Psoas muscle (tissue), 8 donors: ENCODE measurements at regions of chr6 and their contacts with region 1.

Region 1: DNA sequence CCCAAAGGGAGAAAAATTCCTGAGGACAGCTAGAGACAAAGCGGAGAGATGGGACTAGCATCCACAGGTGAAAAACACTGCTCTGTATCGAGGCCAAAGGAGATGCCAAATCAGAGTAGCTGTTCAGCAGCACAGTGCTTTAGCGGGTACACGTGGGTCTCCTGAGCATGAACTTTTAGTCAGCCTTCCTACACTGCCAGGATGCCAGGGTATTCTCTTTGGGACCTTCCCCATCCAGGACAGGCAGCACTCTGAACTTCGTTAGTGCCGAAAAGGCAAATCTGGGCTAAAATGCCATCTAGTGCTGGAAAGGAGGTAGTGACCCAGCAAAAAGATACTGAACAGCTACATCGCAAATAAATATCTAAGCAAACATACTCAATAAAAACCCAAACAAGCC is 64.9 kb downstream of the C6orf58 start:
- DNase-seq: no peak
- ATAC-seq: peak in 3 of 4 donors; percentile 46 to 64 (median 47)
- H3K4me3 ChIP-seq: no peak overlapping the region
- H3K27ac ChIP-seq: no peak overlapping the region
- H3K4me1 ChIP-seq: no peaks in the 10 kb centered on the region
- H3K27me3 ChIP-seq: no peaks in the 10 kb centered on the region
- CTCF ChIP-seq: peak; percentile 46

Region 2: DNA sequence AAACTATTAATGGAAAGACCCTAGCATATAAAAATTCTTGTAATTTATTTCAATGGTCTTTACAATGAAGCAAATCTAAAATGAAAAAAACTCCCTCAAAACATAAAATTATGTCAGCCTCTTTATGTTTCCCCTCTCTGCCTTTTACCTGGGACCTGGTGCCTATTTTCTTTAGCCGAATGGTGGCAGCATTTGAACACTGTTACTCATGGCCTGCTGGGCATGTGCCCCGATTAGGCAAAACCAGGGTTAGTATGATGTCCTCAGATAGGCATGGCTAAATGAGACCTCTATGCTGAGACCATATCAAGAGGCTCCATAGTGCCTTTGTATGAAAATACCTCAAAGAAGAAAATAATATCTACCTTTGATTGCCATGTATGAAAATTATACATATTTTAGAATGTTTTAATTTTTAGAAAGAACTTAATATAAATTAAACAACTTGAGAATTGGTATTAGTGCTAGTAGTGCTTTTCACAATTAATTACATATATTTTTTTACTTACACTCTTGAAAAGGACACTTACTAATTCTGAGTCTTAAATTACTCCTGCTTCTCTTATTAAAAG is 87.4 kb before region 1 on chr6:
- intact Hi-C with region 1: loop called in 1 of 2 experiments (anchors 5 kb)
- DNase-seq: no peak
- ATAC-seq: peak; percentile 52 to 67 (median 58)
- H3K4me3 ChIP-seq: no peak overlapping the region
- H3K27ac ChIP-seq: no peak overlapping the region
- H3K4me1 ChIP-seq: no peaks in the 10 kb centered on the region
- H3K27me3 ChIP-seq: no peaks in the 10 kb centered on the region
- CTCF ChIP-seq: peak; percentile 37

Region 3: DNA sequence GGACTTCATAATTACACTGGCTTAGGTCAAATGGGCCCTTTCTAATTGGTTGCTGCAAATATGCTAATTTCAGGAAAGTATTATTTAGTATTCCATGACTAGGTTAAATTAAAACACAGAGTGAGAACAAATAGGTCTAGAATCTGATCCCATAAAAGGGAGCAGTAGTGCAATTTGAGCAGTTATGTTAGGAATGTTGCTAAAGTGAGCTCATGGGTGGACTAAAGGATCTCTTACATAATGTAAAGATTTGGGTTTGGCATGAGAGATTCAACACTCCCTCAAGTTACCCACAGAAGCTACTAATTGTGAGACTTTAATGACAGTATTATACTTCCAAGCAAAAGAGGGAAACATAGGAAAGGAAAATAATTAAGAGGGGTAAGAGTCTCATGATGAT is 44.2 kb after region 1 on chr6:
- intact Hi-C with region 1: no loop called
- DNase-seq: no peak
- ATAC-seq: no peak
- H3K4me3 ChIP-seq: no peak overlapping the region
- H3K27ac ChIP-seq: no peak overlapping the region
- H3K4me1 ChIP-seq: no peaks in the 10 kb centered on the region
- H3K27me3 ChIP-seq: no peaks in the 10 kb centered on the region
- CTCF ChIP-seq: no peak